CD4-positive, alpha-beta memory T cell (primary cell): ENCODE measurements at regions of chr11 and their contacts with region 1.

Region 1: DNA sequence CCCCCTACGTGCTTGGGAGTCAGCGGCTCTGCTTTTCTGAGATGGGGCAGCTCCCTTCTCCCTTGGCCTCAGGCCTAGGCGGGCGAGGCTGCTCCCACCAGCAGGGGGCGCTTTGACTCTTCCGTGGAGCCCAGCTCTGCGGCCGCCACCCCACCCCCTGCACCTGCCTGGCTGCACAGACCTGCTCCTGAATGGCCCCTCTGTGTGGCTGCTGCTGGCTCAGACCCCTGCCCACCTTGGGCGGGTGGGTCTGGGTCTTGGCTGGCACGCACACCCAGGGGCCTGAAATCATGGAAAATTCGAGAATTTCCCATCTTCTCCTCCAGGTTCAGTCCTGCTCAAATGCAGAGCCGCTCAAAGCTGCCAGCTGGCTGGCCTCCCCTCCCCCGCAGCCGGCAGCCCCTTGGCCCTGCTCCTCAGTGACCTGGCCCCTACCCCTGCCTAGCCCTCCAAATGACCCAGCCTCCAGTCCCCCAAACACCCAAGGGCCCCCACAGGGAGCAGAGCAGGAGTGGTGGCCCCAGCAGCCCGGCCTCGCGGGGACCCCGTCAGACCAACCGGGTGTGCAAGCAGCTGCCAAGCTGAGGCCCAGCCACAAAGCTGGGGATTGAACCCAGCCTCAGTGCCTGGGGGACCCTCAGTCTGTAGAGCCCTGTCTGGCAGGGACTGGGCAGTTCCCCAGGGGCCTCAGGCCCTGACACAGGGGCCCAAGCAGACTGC is 9.0 kb downstream of the PRR33 start:
- DNase-seq: peak; percentile 69 to 79 (median 72)
- H3K4me3 ChIP-seq: no peak overlapping the region
- H3K4me3 Mint-ChIP-seq: no peak overlapping the region
- H3K27ac ChIP-seq: peak overlapping the region; percentile 20
- H3K27ac Mint-ChIP-seq: peak overlapping the region in 3 of 7 donors; percentile 47 to 64 (median 61)
- H3K4me1 ChIP-seq: peaks cover 23% of the 10 kb centered on the region
- H3K4me1 Mint-ChIP-seq: peaks cover 3 to 16% (median 8%) of the 10 kb centered on the region in 4 donors
- H3K27me3 ChIP-seq: no peaks in the 10 kb centered on the region
- H3K27me3 Mint-ChIP-seq: no peaks in the 10 kb centered on the region

Region 2: DNA sequence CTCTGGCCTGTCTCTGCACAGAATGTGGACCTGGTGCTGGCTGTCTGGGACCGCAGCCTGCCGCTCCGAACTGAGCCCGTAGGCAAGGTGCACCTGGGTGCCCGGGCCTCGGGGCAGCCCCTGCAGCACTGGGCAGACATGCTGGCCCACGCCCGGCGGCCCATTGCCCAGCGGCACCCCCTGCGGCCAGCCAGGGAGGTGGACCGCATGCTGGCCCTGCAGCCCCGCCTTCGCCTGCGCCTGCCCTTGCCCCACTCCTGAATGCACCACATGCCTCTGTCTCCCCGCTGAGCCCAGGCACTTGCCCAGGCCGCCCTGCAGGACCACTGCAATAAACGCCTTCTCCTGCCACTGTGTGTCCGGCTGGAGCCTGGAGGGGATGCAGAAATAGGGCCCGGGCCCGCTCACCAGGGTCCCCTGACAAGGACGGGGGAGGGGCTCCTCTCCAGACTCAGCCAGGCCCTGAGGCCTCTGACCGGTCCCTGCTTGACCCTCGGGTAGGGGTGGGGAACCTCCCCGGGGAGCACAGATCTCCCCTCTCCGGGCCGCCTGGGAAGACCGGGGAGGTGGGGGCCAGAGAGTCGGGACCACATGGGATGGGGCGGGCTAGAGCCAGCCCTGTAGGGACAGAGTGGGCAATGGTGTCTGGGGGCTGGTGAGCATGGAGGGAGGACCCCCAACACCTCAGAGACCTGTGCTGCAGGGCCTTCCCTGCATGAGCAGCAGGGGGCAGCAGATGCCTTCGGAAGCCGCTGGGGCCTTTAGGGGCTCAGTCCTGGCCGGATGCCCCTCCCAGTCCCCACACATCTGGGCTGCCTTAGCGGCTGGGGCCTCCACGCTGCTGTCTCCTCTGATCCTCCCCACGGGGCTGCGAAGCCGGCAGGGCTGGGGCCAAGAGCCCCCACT is 45.3 kb before region 1 on chr11:
- CTCF ChIA-PET with region 1: interaction called, 4 read pairs
- POLR2A ChIA-PET with region 1: interaction called, 5 read pairs
- intact Hi-C with region 1: loop called (anchors 1 kb)
- DNase-seq: peak; percentile 63 to 79 (median 75)
- H3K4me3 ChIP-seq: no peak overlapping the region
- H3K4me3 Mint-ChIP-seq: no peak overlapping the region
- H3K27ac ChIP-seq: no peak overlapping the region
- H3K27ac Mint-ChIP-seq: peak overlapping the region in 1 of 7 donors; percentile 30
- H3K4me1 ChIP-seq: peaks cover 20% of the 10 kb centered on the region
- H3K4me1 Mint-ChIP-seq: peaks cover 5 to 10% (median 6%) of the 10 kb centered on the region in 4 donors
- H3K27me3 ChIP-seq: no peaks in the 10 kb centered on the region
- H3K27me3 Mint-ChIP-seq: no peaks in the 10 kb centered on the region

Region 3: DNA sequence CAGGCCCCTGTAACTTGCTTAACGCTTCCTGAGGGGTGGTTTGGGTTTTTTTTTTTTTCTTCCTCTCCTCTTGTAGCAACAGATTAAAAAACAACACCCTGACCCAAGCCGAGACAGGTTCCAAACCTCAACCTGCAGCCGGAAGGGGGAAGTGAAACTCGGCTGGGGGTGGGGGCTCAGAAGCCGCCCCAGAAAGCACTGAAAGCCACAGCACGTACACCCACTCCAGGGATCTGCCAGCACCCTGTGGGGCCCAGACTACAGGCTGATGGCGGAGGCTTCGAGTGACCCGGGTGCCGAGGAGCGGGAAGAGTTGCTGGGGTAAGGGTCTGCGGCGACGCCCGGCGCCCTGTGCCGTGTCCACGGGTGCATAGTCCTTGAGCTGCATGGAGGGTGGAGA is 29.8 kb before region 1 on chr11 and contains the start of gene LSP1:
- CTCF ChIA-PET with region 1: interaction called, 46 read pairs
- POLR2A ChIA-PET with region 1: interaction called, 189 read pairs
- intact Hi-C with region 1: loop called (anchors 1 kb)
- DNase-seq: peak; percentile 88 to 92 (median 88)
- H3K4me3 ChIP-seq: peak within 1 kb of the TSS; percentile 39 to 95
- H3K4me3 Mint-ChIP-seq: peak within 1 kb of the TSS; percentile 95 to 99 (median 98)
- H3K27ac ChIP-seq: peak within 1 kb of the TSS; percentile 77
- H3K27ac Mint-ChIP-seq: peak within 1 kb of the TSS; percentile 96 to 99 (median 98)
- H3K4me1 ChIP-seq: peaks cover 82% of the 10 kb centered on the region
- H3K4me1 Mint-ChIP-seq: peaks cover 25 to 77% (median 50%) of the 10 kb centered on the region in 4 donors
- H3K27me3 ChIP-seq: no peaks in the 10 kb centered on the region
- H3K27me3 Mint-ChIP-seq: no peaks in the 10 kb centered on the region
- total RNA-seq, gene LSP1: 324 to 327 TPM

Region 4: GRCh38 chr11:1917671-1918516 is 35.2 kb after region 1 on chr11:
- CTCF ChIA-PET with region 1: interaction called, 3 read pairs
- POLR2A ChIA-PET with region 1: interaction called, 63 read pairs
- intact Hi-C with region 1: loop called (anchors 5 kb)
- DNase-seq: peak in 1 of 5 donors; percentile 11
- H3K4me3 ChIP-seq: no peak overlapping the region
- H3K4me3 Mint-ChIP-seq: no peak overlapping the region
- H3K27ac ChIP-seq: no peak overlapping the region
- H3K27ac Mint-ChIP-seq: peak overlapping the region in 1 of 7 donors; percentile 18
- H3K4me1 ChIP-seq: no peaks in the 10 kb centered on the region
- H3K4me1 Mint-ChIP-seq: peaks cover 6 to 12% (median 9%) of the 10 kb centered on the region in 4 donors
- H3K27me3 ChIP-seq: no peaks in the 10 kb centered on the region
- H3K27me3 Mint-ChIP-seq: peaks cover 7% of the 10 kb centered on the region in 2 donors

Region 5: GRCh38 chr11:2151500-2152257 is 269.0 kb after region 1 on chr11:
- CTCF ChIA-PET with region 1: interaction called, 17 read pairs
- POLR2A ChIA-PET with region 1: no interaction called
- intact Hi-C with region 1: loop called (anchors 1 kb)
- DNase-seq: peak; percentile 76 to 84 (median 78)
- H3K4me3 ChIP-seq: no peak overlapping the region
- H3K4me3 Mint-ChIP-seq: peak overlapping the region; percentile 20 to 67 (median 48)
- H3K27ac ChIP-seq: no peak overlapping the region
- H3K27ac Mint-ChIP-seq: peak overlapping the region in 5 of 7 donors; percentile 22 to 55 (median 26)
- H3K4me1 ChIP-seq: peaks cover 6% of the 10 kb centered on the region
- H3K4me1 Mint-ChIP-seq: peaks cover 5 to 11% (median 7%) of the 10 kb centered on the region in 4 donors
- H3K27me3 ChIP-seq: peaks cover 11% of the 10 kb centered on the region
- H3K27me3 Mint-ChIP-seq: peaks cover 10 to 31% of the 10 kb centered on the region in 2 donors